Adrenal gland (tissue), 19 donors: ENCODE measurements at regions of chr6 and their contacts with region 1.

Region 1: DNA sequence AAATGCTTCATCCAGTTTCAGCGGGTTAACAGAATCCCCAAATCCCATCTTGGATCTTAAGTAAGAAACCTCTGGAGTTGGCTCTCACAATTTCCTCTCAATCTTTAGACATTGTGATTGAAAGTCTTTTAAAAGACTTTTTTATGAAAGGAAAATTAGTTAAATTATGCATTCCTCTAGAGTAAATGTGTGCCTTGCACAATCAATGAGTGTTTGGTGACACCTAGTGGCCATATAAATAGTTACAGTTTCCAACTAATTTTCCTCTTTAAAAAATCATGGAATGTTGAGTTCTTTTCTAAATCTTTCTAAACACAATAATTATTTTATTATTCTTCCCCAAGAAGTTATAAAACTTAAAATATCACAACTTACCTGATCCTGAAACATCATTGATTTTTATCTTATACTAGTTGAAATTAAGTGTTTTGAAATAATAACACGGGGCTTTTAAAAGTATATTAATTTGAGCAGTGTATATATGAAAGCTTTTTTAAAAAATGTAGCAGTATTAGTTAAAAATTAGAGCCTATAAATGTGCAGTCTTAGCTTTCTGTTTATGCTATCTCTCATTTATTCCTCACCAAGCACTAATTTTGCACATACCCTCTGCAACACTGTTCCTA is 66.4 kb downstream of the PKHD1 start:
- DNase-seq: no peak
- H3K4me3 ChIP-seq: no peak overlapping the region
- H3K27ac ChIP-seq: no peak overlapping the region
- H3K4me1 ChIP-seq: no peaks in the 10 kb centered on the region
- H3K27me3 ChIP-seq: no peaks in the 10 kb centered on the region
- CTCF ChIP-seq: peak; percentile 52 to 89 (median 74)
- POLR2A ChIP-seq: no peak

Region 2: DNA sequence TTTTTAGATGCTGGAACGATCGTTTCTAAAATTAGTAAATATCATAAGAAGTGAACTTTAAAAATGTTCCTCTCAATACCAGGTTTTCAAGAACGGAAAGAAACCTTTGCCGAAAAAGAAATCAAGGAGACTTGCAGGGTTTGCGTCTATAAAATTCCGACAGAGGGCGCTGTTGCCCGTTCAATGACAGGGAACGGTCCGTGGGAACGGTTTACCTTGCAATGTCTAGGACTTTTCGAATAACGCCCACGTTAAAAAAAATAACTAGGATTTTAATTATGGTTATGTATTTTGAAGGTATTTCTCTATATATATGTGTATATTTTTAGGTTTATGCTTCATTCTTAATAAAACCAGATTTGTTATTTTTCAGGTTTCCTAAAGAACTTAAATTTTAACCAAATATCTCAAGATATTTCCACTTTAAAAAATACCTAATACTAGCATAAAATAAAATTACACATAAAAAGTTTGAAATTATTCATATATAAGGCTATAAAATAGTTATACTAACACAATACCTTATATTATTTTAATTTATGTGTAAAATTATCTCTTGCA is 1204.9 kb before region 1 on chr6:
- intact Hi-C with region 1: loop called in 1 of 2 experiments (anchors 10 kb)
- DNase-seq: peak; percentile 53 to 91 (median 75)
- H3K4me3 ChIP-seq: peak overlapping the region in 2 of 4 donors; percentile 10 to 52
- H3K27ac ChIP-seq: no peak overlapping the region
- H3K4me1 ChIP-seq: peaks cover 8 to 13% of the 10 kb centered on the region in 2 donors
- H3K27me3 ChIP-seq: peaks cover 42% of the 10 kb centered on the region
- CTCF ChIP-seq: peak; percentile 72 to 93 (median 78)
- POLR2A ChIP-seq: no peak

Region 3: DNA sequence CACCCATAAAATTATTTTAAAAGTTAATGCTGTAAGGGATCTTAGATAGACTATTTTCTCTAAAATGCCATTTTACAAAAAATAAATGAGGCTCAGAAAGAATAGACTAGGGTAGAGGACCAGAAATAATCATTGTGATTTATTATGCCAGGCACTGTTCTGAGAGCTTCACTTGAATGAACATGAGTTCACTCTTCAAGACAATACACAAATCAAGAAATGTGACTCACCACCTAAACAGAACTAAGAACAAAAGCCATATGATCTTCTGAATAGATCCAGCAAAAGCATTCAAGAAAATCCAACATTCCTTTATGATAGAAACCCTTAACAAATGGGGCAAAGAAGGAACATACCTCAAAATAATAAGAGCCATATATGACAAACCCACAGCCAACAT is 515.6 kb before region 1 on chr6:
- intact Hi-C with region 1: no loop called
- DNase-seq: no peak
- H3K4me3 ChIP-seq: no peak overlapping the region
- H3K27ac ChIP-seq: no peak overlapping the region
- H3K4me1 ChIP-seq: no peaks in the 10 kb centered on the region
- H3K27me3 ChIP-seq: no peaks in the 10 kb centered on the region
- CTCF ChIP-seq: no peak
- POLR2A ChIP-seq: no peak

Region 4: GRCh38 chr6:51778666-51779065 is 242.4 kb before region 1 on chr6:
- intact Hi-C with region 1: no loop called
- DNase-seq: no peak
- H3K4me3 ChIP-seq: no peak overlapping the region
- H3K27ac ChIP-seq: no peak overlapping the region
- H3K4me1 ChIP-seq: no peaks in the 10 kb centered on the region
- H3K27me3 ChIP-seq: no peaks in the 10 kb centered on the region
- CTCF ChIP-seq: no peak
- POLR2A ChIP-seq: no peak

Region 5: GRCh38 chr6:51855310-51856082 is 165.6 kb before region 1 on chr6:
- intact Hi-C with region 1: loop called (anchors 5 to 10 kb)
- DNase-seq: peak in 5 of 7 donors; percentile 14 to 61 (median 35)
- H3K4me3 ChIP-seq: no peak overlapping the region
- H3K27ac ChIP-seq: no peak overlapping the region
- H3K4me1 ChIP-seq: no peaks in the 10 kb centered on the region
- H3K27me3 ChIP-seq: peaks cover 3% of the 10 kb centered on the region
- CTCF ChIP-seq: peak; percentile 32 to 67 (median 52)
- POLR2A ChIP-seq: no peak

Region 6: GRCh38 chr6:51926125-51926524 is 94.9 kb before region 1 on chr6:
- intact Hi-C with region 1: no loop called
- DNase-seq: no peak
- H3K4me3 ChIP-seq: no peak overlapping the region
- H3K27ac ChIP-seq: no peak overlapping the region
- H3K4me1 ChIP-seq: no peaks in the 10 kb centered on the region
- H3K27me3 ChIP-seq: no peaks in the 10 kb centered on the region
- CTCF ChIP-seq: no peak
- POLR2A ChIP-seq: no peak

Region 7: GRCh38 chr6:52063584-52064344 is 42.7 kb after region 1 on chr6:
- intact Hi-C with region 1: no loop called
- DNase-seq: peak in 6 of 7 donors; percentile 13 to 55 (median 26)
- H3K4me3 ChIP-seq: no peak overlapping the region
- H3K27ac ChIP-seq: no peak overlapping the region
- H3K4me1 ChIP-seq: no peaks in the 10 kb centered on the region
- H3K27me3 ChIP-seq: peaks cover 3% of the 10 kb centered on the region
- CTCF ChIP-seq: peak in 4 of 6 experiments; percentile 7 to 44 (median 35)
- POLR2A ChIP-seq: no peak